Right ventricle myocardium superior (tissue), 1 donor: ENCODE measurements at regions of chr3 and their contacts with region 1.

Region 1: GRCh38 chr3:44477312-44478030 is at the start of gene ZNF445:
- DNase-seq: peak; percentile 89
- ATAC-seq: peak; percentile 99
- total RNA-seq, gene ZNF445: 12.8 TPM

Region 2: DNA sequence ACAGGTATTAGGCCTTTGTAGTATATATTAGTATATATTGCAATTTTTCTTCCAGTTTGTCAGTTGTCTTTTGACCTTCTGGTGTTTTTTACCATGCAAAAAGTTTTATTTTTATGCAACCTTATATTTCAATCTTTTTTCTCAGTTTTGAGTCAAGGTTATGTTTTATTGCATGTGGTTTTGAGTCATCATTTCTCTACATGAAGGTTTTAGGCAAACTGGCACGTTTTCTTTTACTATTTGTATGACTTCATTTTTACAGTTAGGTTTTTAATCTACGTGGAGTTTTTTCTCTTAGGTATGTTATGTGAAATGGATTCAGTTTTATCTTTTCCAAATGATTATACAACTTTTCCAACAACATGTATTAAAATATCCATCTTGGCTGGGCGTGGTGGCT is 175.7 kb before region 1 on chr3:
- intact Hi-C with region 1: no loop called
- DNase-seq: no peak
- ATAC-seq: no peak

Region 3: DNA sequence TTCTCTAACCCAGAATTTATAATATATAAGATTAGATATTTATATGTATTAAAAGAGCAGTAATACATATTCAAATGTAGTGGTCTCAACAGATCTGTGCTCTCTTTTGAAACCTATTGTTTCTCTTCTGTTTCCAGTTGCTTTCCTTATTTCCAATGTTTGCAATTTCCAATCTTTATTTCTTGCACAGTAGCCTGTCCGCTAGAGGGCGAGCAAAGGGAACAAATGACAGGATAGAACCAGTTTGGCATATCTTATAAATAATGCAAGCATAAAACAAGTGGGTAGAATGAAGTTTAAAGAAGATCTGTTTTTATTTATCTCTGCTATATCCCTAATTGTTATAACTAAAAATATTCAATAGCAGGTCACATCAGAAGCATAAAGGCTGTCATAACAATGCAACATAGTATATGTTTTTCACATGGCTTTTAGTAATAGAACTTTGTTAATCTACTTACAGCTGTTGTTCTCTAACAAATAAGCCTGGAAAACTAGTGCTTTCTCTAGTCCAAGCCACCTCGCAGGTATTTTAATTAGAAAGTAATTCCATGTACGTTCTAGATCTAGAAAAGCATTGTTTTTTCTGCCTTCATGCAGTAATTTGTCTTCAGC is 154.0 kb before region 1 on chr3:
- intact Hi-C with region 1: loop called (anchors 10 kb)
- DNase-seq: peak; percentile 55
- ATAC-seq: no peak

Region 4: DNA sequence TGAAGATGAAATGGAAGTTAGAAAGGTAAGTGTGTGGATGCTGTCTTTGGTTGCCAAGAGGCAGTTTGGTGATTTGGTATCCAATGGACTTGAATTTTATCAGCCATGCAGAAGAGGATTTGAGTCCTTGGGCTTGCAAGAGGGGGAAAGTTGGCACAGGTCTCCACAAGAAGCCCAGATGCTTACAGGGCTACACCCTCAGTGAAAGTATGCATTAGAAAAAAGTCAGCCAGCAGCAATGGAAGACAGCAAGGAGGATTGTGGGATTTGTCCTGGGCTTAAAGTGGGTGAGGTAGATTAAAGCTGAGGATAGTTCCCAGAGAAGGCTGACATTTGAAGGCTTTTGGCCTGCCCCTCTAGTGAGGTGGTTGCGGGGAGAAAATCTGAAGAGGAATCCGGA is 124.3 kb after region 1 on chr3:
- intact Hi-C with region 1: no loop called
- DNase-seq: no peak
- ATAC-seq: no peak

Region 5: DNA sequence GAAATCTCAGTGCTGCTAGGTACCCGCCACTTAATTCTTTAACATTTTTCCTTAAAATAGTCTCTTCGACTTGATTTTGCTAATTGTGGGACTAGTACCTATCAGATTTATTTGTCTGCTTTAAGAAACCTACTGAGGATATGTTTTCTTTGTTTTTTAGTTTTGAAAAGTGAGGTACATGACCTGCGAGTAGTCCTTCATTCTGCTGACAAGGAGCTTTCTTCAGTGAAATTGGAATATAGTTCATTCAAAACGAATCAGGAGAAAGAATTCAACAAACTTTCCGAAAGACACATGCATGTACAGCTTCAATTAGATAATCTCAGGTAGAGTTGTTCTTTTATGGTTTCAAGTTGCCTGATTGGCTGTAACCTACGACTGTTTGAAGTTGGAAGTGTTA is 337.3 kb after region 1 on chr3:
- intact Hi-C with region 1: no loop called
- DNase-seq: no peak
- ATAC-seq: no peak

Region 6: GRCh38 chr3:44893097-44893496 is 415.6 kb after region 1 on chr3:
- intact Hi-C with region 1: no loop called
- DNase-seq: no peak
- ATAC-seq: no peak